Kidney (tissue), 22 donors: ENCODE measurements at regions of chr17 and their contacts with region 1.

Region 1: GRCh38 chr17:46072998-46073397 is 73.9 kb downstream of the STH start:
- DNase-seq: no peak
- H3K4me3 ChIP-seq: no peak overlapping the region
- H3K27ac ChIP-seq: no peak overlapping the region
- H3K4me1 ChIP-seq: peaks cover 0 to 5% (median 4%) of the 10 kb centered on the region in 3 donors
- H3K27me3 ChIP-seq: no peaks in the 10 kb centered on the region
- CTCF ChIP-seq: no peak

Region 2: GRCh38 chr17:45873728-45874127 is 199.3 kb before region 1 on chr17:
- intact Hi-C with region 1: no loop called
- DNase-seq: peak in 1 of 5 donors; percentile 11
- H3K4me3 ChIP-seq: no peak overlapping the region
- H3K27ac ChIP-seq: no peak overlapping the region
- H3K4me1 ChIP-seq: no peaks in the 10 kb centered on the region
- H3K27me3 ChIP-seq: no peaks in the 10 kb centered on the region
- CTCF ChIP-seq: no peak

Region 3: DNA sequence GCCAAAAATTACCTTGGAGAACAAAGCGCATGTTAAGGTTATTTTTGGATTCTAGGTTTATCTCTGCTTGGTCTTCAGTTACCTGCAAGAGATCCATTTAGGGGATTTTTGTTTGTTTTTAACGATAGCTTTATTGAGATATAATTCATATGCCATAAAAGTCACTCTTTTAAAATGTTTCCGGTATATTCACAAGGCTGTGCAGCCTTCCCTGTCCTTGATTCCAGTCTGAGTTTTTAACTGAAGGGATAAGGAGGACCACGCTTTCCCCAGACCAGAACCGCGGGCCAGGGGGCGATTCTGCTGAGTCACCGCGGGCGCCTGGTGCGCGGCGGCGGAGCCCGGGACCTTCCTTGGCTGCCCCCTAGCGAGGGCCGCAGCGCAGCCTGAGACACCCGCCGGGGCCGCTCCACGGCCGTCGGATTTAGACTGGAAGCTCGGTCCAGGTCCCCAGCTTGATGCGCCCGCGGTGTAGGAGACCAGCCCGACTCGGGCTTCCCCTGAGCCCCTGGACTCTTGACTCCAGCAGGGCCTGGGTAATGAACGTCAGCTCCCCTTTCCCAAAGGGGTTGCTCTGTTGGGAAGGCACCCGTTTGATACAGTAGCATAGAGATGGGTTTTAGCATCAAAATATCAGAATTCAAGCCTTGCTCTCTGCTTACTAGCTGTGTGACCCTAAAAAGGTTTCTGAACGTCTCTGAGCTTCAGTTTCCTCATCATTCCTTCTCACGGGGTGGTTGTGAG is 123.9 kb before region 1 on chr17:
- intact Hi-C with region 1: no loop called
- DNase-seq: peak; percentile 59 to 92 (median 74)
- H3K4me3 ChIP-seq: peak overlapping the region in 1 of 3 donors; percentile 32
- H3K27ac ChIP-seq: no peak overlapping the region
- H3K4me1 ChIP-seq: peaks cover 0 to 7% (median 5%) of the 10 kb centered on the region in 3 donors
- H3K27me3 ChIP-seq: peaks cover 4% of the 10 kb centered on the region
- CTCF ChIP-seq: peak; percentile 58

Region 4: GRCh38 chr17:46121841-46122485 is 49.0 kb after region 1 on chr17:
- intact Hi-C with region 1: loop called (anchors 10 kb)
- DNase-seq: no peak
- H3K4me3 ChIP-seq: no peak overlapping the region
- H3K27ac ChIP-seq: no peak overlapping the region
- H3K4me1 ChIP-seq: peaks cover 0 to 29% (median 10%) of the 10 kb centered on the region in 3 donors
- H3K27me3 ChIP-seq: no peaks in the 10 kb centered on the region
- CTCF ChIP-seq: no peak

Region 5: DNA sequence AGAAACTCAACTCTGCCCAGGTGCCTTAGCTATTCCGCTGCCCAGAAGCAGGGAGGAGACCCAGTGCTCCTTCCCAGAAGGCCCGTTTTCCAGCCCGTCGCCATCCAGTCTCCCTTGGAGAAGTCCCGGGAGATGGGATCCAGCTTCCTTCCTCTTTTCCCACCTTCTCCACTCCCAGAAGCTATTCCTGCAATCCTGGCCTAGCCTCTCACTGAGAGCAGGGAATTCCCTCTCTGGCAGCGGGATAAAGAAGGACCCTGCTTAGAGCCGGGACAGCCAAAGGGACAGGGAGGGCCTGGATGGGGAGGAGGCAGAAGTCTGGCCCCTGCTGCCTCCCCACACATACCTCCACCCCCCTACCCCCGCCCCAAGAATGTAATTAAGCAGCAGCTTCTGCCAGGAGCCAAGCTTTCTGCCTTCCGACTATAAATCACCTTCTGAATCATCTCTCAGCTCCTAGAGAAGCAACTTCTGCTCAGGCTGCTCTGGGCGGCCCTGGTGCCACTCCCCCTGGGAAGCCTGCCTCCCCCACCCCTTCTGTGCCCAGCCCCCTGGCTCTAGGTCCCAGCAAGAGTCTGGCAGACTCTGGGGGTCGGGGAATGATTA is 739.1 kb after region 1 on chr17:
- intact Hi-C with region 1: no loop called
- DNase-seq: peak in 4 of 5 donors; percentile 67 to 84 (median 80)
- H3K4me3 ChIP-seq: no peak overlapping the region
- H3K27ac ChIP-seq: no peak overlapping the region
- H3K4me1 ChIP-seq: no peaks in the 10 kb centered on the region
- H3K27me3 ChIP-seq: peaks cover 7% of the 10 kb centered on the region
- CTCF ChIP-seq: no peak